Activated naive CD4-positive, alpha-beta T cell treated with anti-CD3 and anti-CD28 coated beads for 36 hours (primary cell): ENCODE measurements at regions of chr20 and their contacts with region 1.

Region 1: DNA sequence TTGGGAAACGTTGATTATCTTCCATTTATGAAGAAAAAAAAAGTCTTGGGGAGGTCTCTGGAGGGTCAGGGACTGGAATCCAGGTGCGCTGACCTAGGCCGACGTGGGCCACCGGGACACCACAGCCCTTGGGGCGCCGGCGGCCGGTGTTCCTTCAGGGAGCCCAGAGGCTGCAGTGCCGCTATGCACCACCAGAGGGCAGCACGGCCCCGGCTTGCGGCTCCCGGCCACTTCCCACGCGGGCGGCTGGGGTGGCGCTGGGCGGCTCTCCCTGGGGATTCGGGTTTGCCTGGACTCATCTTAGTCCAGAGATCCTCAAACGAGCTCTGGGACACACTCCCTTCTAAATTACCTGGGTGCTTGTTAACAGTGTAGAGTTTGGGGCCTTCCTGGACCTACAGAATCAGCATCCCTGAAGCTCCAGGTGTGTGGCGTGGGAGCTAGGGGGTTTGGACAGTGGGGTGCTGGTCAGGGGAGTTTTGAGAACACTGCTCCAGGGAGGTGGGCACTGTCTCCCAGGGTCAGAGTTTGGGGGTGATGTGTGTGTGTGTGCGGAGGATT is 23.0 kb upstream of the GTSF1L start:
- DNase-seq: peak; percentile 88
- H3K4me3 Mint-ChIP-seq: no peak overlapping the region
- H3K27ac Mint-ChIP-seq: peak overlapping the region; percentile 54
- H3K4me1 Mint-ChIP-seq: peaks cover 44% of the 10 kb centered on the region
- H3K27me3 Mint-ChIP-seq: no peaks in the 10 kb centered on the region

Region 2: DNA sequence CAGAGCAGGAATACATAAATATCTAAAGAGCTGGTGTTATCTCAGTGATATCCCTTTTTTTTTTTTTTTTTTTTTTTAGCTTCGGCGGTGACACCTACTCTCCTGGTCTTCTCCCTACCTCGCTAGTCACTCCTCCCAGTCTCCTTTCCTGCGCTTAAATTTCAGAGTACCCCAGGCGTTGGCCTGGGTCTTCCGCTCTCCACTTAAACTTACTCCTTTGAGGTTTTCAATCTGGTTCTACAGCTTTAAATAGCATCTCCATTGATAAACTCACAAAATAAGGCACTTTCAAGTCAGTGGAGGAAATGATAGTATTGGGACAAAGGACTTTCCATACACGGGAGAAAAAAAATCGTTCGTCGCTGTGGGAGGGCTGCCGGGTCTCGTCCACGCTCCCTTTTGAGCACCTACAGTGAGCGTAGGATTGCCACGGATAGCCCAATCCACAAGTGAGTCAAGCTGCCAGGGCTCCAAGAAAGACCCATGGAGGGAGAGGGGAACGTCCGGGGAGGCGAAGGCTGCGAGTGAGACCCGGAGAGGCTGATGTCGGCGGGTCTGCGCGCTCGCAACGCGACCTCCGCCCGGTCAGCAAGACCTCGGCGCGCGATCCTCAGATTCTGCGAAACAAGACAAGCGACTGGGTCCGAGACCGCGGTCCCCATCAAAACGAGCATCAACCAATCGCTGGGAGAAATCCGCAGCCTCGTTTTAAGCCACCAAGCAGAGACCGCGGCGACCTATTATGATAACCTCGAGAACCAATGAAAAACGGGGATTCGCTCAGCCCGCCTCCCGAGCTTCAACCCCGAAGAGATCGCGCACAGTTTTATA is 292.8 kb before region 1 on chr20:
- CTCF ChIA-PET with region 1: no interaction called
- intact Hi-C with region 1: loop called (anchors 1 kb)
- DNase-seq: peak; percentile 92
- H3K4me3 Mint-ChIP-seq: peak overlapping the region; percentile 81
- H3K27ac Mint-ChIP-seq: peak overlapping the region; percentile 95
- H3K4me1 Mint-ChIP-seq: peaks cover 28% of the 10 kb centered on the region
- H3K27me3 Mint-ChIP-seq: peaks cover 5% of the 10 kb centered on the region

Region 3: DNA sequence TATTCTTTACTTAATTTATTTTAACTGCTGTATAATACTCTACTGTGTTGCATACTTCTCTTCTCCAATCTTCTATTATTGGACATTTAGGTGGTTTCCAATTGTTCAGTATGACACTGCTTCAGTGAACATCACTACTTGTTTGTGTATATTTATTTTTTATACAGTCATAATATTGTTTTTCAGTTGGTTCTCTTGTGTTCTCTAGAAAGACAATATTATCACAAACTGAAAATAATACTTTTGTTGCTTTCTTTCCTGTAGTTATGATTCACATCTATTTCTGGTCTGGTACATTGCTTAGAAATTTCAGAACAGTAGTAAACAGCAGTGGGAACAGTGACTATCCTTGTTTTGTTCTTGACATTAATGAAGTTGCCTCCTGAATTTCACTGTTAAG is 39.8 kb after region 1 on chr20:
- CTCF ChIA-PET with region 1: no interaction called
- intact Hi-C with region 1: no loop called
- DNase-seq: no peak
- H3K4me3 Mint-ChIP-seq: no peak overlapping the region
- H3K27ac Mint-ChIP-seq: no peak overlapping the region
- H3K4me1 Mint-ChIP-seq: no peaks in the 10 kb centered on the region
- H3K27me3 Mint-ChIP-seq: peaks cover 5% of the 10 kb centered on the region

Region 4: GRCh38 chr20:43824309-43825050 is 74.7 kb after region 1 on chr20:
- CTCF ChIA-PET with region 1: no interaction called
- intact Hi-C with region 1: loop called (anchors 5 kb)
- DNase-seq: no peak
- H3K4me3 Mint-ChIP-seq: no peak overlapping the region
- H3K27ac Mint-ChIP-seq: no peak overlapping the region
- H3K4me1 Mint-ChIP-seq: peaks cover 8% of the 10 kb centered on the region
- H3K27me3 Mint-ChIP-seq: peaks cover 3% of the 10 kb centered on the region

Region 5: GRCh38 chr20:43955062-43955749 is 205.4 kb after region 1 on chr20:
- CTCF ChIA-PET with region 1: interaction called, 8 read pairs
- intact Hi-C with region 1: loop called (anchors 1 kb)
- DNase-seq: peak; percentile 76
- H3K4me3 Mint-ChIP-seq: no peak overlapping the region
- H3K27ac Mint-ChIP-seq: peak overlapping the region; percentile 62
- H3K4me1 Mint-ChIP-seq: peaks cover 72% of the 10 kb centered on the region
- H3K27me3 Mint-ChIP-seq: peaks cover 9% of the 10 kb centered on the region

Region 6: GRCh38 chr20:44074252-44075151 is 324.7 kb after region 1 on chr20:
- CTCF ChIA-PET with region 1: interaction called, 79 read pairs
- intact Hi-C with region 1: loop called (anchors 1 kb)
- DNase-seq: peak; percentile 51
- H3K4me3 Mint-ChIP-seq: no peak overlapping the region
- H3K27ac Mint-ChIP-seq: no peak overlapping the region
- H3K4me1 Mint-ChIP-seq: peaks cover 58% of the 10 kb centered on the region
- H3K27me3 Mint-ChIP-seq: no peaks in the 10 kb centered on the region

Region 7: GRCh38 chr20:44196271-44196670 is 446.5 kb after region 1 on chr20:
- CTCF ChIA-PET with region 1: no interaction called
- intact Hi-C with region 1: loop called (anchors 5 kb)
- DNase-seq: no peak
- H3K4me3 Mint-ChIP-seq: no peak overlapping the region
- H3K27ac Mint-ChIP-seq: no peak overlapping the region
- H3K4me1 Mint-ChIP-seq: peaks cover 18% of the 10 kb centered on the region
- H3K27me3 Mint-ChIP-seq: no peaks in the 10 kb centered on the region

Region 8: GRCh38 chr20:44966030-44966961 is 1216.5 kb after region 1 on chr20 and contains the start of gene STK4:
- CTCF ChIA-PET with region 1: no interaction called
- intact Hi-C with region 1: loop called (anchors 5 kb)
- DNase-seq: peak; percentile 96
- H3K4me3 Mint-ChIP-seq: peak within 1 kb of the TSS; percentile 88
- H3K27ac Mint-ChIP-seq: peak within 1 kb of the TSS; percentile 98
- H3K4me1 Mint-ChIP-seq: peaks cover 56% of the 10 kb centered on the region
- H3K27me3 Mint-ChIP-seq: no peaks in the 10 kb centered on the region
- total RNA-seq, gene STK4: 110 to 116 TPM